ENCODE measurements at regions of chr13 and their contacts with region 1.

Region 1: DNA sequence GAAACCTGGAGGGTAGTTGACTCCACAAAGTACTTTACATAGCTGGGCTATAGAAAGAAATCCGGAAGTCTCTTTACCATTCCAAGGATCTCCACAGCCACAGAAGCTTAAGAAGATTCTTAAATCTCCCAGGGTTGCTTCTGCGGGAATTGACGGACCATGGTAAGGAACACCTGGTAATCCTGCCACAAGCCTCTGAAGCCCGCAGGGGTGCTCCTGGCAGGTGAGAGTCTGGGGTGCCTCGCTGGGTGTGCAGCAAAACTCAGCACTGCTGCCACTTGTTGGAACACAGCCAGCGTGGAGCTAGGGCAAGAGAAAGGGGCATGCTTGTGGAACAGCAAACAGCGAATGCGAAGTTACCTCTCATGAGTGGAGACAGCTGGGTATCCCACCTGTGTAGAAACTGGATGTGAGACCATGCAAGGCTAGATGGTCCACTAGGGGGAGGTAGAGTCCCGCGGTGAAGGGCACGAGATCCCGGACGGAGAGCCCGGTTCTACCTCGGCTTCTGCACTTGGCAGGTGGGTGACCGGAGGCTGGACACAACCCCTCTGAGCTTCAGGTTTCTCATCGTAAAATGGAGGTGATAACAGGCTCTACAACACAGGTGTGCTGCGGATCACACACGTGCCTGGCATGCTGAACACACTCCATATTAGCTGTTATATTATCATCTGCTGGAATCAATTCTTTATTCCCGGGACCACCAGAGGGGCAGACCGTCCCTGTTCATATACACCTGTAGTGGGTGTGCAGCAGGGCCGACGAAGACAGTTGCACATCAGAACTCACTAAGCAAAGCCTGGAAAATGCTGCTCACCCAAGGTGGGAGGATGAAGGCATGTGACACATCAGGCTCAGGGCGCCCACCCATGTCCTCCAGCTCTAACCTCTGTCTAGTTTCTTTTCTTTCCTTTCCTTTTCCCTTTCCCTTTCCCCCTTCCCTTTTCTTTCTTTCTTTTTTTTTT is 24.1 kb upstream of the UBAC2 start:
- DNase-seq: peak; percentile 43
- ATAC-seq: peak; percentile 97
- H3K4me3 ChIP-seq: no peak overlapping the region
- H3K27ac ChIP-seq: no peak overlapping the region
- H3K4me1 ChIP-seq: no peaks in the 10 kb centered on the region
- H3K27me3 ChIP-seq: peaks cover 35% of the 10 kb centered on the region
- CTCF ChIP-seq: peak; percentile 84
- POLR2A ChIP-seq: no peak
- RAD21 ChIP-seq: peak; percentile 92

Region 2: DNA sequence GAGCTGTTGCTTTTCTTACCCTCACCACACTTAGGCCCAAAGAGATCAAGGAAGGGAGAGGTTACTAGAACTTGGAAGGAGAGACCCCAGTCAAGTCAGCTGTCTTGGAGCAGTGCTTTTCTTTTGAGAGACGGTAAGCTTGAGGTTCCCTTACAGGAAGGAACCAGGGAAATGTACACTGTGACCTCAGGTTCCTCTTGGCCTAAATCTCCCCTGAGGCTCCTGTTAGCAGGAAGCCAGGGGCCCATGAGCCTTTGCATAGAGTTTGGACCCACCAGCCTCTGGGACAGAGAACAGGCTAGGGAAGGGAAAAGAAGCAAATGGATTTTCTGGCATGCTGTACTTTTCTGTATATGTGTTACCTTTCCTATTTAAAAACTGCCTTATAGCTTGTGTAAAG is 87.5 kb after region 1 on chr13:
- CTCF ChIA-PET with region 1: interaction called, 13 read pairs
- POLR2A ChIA-PET with region 1: no interaction called
- dilution Hi-C with region 1: no loop called
- in situ Hi-C with region 1: loop called (anchors 5 kb)
- intact Hi-C with region 1: loop called (anchors 1 kb)
- DNase-seq: no peak
- ATAC-seq: no peak
- H3K4me3 ChIP-seq: no peak overlapping the region
- H3K27ac ChIP-seq: no peak overlapping the region
- H3K4me1 ChIP-seq: no peaks in the 10 kb centered on the region
- H3K27me3 ChIP-seq: no peaks in the 10 kb centered on the region
- CTCF ChIP-seq: no peak
- POLR2A ChIP-seq: no peak
- RAD21 ChIP-seq: no peak